Activated T-helper 1 cell treated with anti-CD3 and anti-CD28 coated beads, Interleukin-12 subunit alpha, Interleukin-12 subunit beta, Interleukin-2, Interleukin-4 antibody, amounts not matched to agents 30 ng/mL and 10 ng/mL and 1 ng/mL, durations not matched to agents 14 hours and 24 hours and 36 hours (primary cell): ENCODE measurements at regions of chr9 and their contacts with region 1.

Region 1: GRCh38 chr9:37913480-37914153 is 9.7 kb upstream of the SLC25A51 start:
- DNase-seq: peak; percentile 65
- H3K4me3 Mint-ChIP-seq: no peak overlapping the region
- H3K27ac Mint-ChIP-seq: no peak overlapping the region
- H3K4me1 Mint-ChIP-seq: peaks cover 10% of the 10 kb centered on the region
- H3K27me3 Mint-ChIP-seq: no peaks in the 10 kb centered on the region

Region 2: DNA sequence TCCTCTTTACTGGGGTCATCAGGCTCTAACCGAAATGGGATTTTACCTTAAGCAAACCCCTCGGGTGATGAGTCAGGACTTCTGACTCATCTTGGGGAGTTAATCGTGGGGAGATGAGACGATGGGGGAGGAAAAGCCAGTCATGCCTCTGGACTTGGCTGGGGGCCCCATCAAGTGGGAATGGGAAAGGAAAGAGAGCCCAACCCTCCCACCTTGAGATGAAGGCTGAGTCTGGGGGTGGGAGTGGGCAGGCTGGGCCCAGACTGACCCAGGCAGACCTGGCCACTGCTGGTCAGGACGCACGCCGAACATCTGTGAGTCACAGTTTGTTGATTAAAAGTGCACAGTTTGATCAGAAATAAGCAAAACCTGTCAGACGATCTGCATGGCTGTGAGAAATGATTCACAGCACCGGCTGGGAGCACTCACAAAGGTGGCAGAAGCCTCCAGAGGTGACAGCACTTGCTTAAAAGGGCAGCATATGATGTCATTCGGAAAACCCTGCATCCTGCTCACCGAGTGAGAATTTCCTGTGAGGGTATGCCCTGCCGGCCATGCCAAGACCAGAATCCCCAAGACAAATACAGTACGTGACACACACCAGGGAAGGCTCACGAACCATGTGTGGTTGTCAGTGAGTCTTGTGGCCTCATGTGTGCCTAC is 40.3 kb after region 1 on chr9:
- intact Hi-C with region 1: loop called (anchors 5 kb)
- DNase-seq: peak; percentile 15
- H3K4me3 Mint-ChIP-seq: peak overlapping the region; percentile 27
- H3K27ac Mint-ChIP-seq: peak overlapping the region; percentile 81
- H3K4me1 Mint-ChIP-seq: peaks cover 38% of the 10 kb centered on the region
- H3K27me3 Mint-ChIP-seq: no peaks in the 10 kb centered on the region

Region 3: GRCh38 chr9:38088006-38088925 is 174.6 kb after region 1 on chr9:
- intact Hi-C with region 1: loop called (anchors 1 kb)
- DNase-seq: peak; percentile 55
- H3K4me3 Mint-ChIP-seq: no peak overlapping the region
- H3K27ac Mint-ChIP-seq: no peak overlapping the region
- H3K4me1 Mint-ChIP-seq: peaks cover 5% of the 10 kb centered on the region
- H3K27me3 Mint-ChIP-seq: peaks cover 22% of the 10 kb centered on the region

Region 4: GRCh38 chr9:38362852-38363593 is 449.4 kb after region 1 on chr9:
- intact Hi-C with region 1: loop called (anchors 2 kb)
- DNase-seq: no peak
- H3K4me3 Mint-ChIP-seq: peak overlapping the region; percentile 49
- H3K27ac Mint-ChIP-seq: no peak overlapping the region
- H3K4me1 Mint-ChIP-seq: no peaks in the 10 kb centered on the region
- H3K27me3 Mint-ChIP-seq: peaks cover 2% of the 10 kb centered on the region

Region 5: GRCh38 chr9:38432922-38433510 is 519.4 kb after region 1 on chr9:
- intact Hi-C with region 1: loop called (anchors 5 kb)
- DNase-seq: no peak
- H3K4me3 Mint-ChIP-seq: no peak overlapping the region
- H3K27ac Mint-ChIP-seq: no peak overlapping the region
- H3K4me1 Mint-ChIP-seq: no peaks in the 10 kb centered on the region
- H3K27me3 Mint-ChIP-seq: peaks cover under 1% of the 10 kb centered on the region